PC-9 (cell line): ENCODE measurements at regions of chr19 and their contacts with region 1.

Region 1: GRCh38 chr19:35109395-35110112 is 6.1 kb upstream of the FXYD3 start:
- DNase-seq: peak; percentile 40 to 71
- H3K4me3 ChIP-seq: no peak overlapping the region
- H3K27ac ChIP-seq: no peak overlapping the region
- H3K4me1 ChIP-seq: peaks cover 26% of the 10 kb centered on the region
- H3K27me3 ChIP-seq: no peaks in the 10 kb centered on the region
- CTCF ChIP-seq: no peak

Region 2: DNA sequence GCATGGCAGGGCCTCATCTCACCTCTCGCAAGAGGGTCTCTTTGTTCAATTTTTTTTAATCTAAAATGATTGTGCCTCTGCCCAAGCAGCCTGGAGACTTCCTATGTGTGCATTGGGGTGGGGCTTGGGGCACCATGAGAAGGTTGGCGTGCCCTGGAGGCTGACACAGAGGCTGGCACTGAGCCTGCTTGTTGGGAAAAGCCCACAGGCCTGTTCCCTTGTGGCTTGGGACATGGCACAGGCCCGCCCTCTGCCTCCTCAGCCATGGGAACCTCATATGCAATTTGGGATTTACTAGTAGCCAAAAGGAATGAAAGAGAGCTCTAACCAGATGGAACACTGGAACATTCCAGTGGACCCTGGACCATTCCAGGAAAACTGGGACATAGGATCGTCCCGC is 14.0 kb after region 1 on chr19:
- CTCF ChIA-PET with region 1: no interaction called
- POLR2A ChIA-PET with region 1: interaction called, 12 read pairs
- intact Hi-C with region 1: loop called (anchors 2 kb)
- DNase-seq: peak; percentile 74 to 79
- H3K4me3 ChIP-seq: peak overlapping the region; percentile 28; the same call in 1 of the 2 replicates
- H3K27ac ChIP-seq: peak overlapping the region; percentile 90
- H3K4me1 ChIP-seq: peaks cover 76% of the 10 kb centered on the region
- H3K27me3 ChIP-seq: no peaks in the 10 kb centered on the region
- CTCF ChIP-seq: no peak

Region 3: GRCh38 chr19:35154525-35155406 is 45.2 kb after region 1 on chr19 and contains the start of gene FXYD5:
- CTCF ChIA-PET with region 1: no interaction called
- POLR2A ChIA-PET with region 1: no interaction called
- intact Hi-C with region 1: no loop called
- DNase-seq: peak; percentile 63 to 65
- H3K4me3 ChIP-seq: peak within 1 kb of the TSS; percentile 71
- H3K27ac ChIP-seq: peak within 1 kb of the TSS; percentile 66
- H3K4me1 ChIP-seq: peaks cover 32% of the 10 kb centered on the region
- H3K27me3 ChIP-seq: no peaks in the 10 kb centered on the region
- CTCF ChIP-seq: no peak
- total RNA-seq, gene FXYD5: 137 and 181 TPM in 2 replicates